ENCODE measurements at regions of chr12 and their contacts with region 1.

Region 1: DNA sequence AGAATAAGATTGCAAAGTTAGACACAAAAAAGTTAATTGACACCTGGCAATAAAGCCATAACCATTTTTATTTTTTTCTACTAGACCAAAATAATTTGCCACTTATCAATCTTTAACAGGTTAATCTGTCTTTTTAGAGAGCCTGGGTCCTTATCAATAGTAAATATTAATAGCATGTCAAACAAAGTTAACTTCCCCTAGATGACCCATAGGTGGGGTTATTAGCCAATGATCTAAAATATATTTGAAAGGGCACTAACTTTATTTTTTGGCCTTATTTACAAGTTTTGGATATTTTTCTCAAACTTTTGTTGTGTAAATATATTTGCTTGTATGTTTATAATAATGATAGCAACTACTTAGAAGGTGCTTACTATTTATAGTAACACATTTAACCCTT is 3.9 kb downstream of the ANKRD33 start:
- DNase-seq: no peak
- ATAC-seq: no peak
- H3K4me3 ChIP-seq: no peak overlapping the region
- H3K27ac ChIP-seq: no peak overlapping the region
- H3K4me1 ChIP-seq: peaks cover 22% of the 10 kb centered on the region; the same call in 1 of the 2 replicates
- H3K27me3 ChIP-seq: peaks cover 7 to 22% of the 10 kb centered on the region in 2 experiments; a peak in 4 of 5 replicates
- CTCF ChIP-seq: peak; percentile 17; the same call in 1 of the 2 replicates
- EP300 ChIP-seq: no peak
- POLR2A ChIP-seq: no peak
- RAD21 ChIP-seq: no peak

Region 2: GRCh38 chr12:51923501-51924271 is 31.8 kb after region 1 on chr12:
- CTCF ChIA-PET with region 1: no interaction called
- POLR2A ChIA-PET with region 1: no interaction called
- in situ Hi-C with region 1: no loop called
- intact Hi-C with region 1: loop called (anchors 1 kb)
- DNase-seq: no peak
- ATAC-seq: peak; percentile 85
- H3K4me3 ChIP-seq: peak overlapping the region in 2 of 3 experiments; percentile 8 to 56; a peak in 2 of 6 replicates
- H3K27ac ChIP-seq: no peak overlapping the region
- H3K4me1 ChIP-seq: peaks cover 37% of the 10 kb centered on the region
- H3K27me3 ChIP-seq: peaks cover 1 to 14% of the 10 kb centered on the region in 2 experiments; a peak in 4 of 5 replicates
- CTCF ChIP-seq: peak; percentile 86
- EP300 ChIP-seq: no peak
- POLR2A ChIP-seq: no peak
- RAD21 ChIP-seq: peak; percentile 50; the same call in 1 of the 2 replicates

Measured in HepG2 (cell line).